A673 (cell line): ENCODE measurements at regions of chr6 and their contacts with region 1.

Region 1: DNA sequence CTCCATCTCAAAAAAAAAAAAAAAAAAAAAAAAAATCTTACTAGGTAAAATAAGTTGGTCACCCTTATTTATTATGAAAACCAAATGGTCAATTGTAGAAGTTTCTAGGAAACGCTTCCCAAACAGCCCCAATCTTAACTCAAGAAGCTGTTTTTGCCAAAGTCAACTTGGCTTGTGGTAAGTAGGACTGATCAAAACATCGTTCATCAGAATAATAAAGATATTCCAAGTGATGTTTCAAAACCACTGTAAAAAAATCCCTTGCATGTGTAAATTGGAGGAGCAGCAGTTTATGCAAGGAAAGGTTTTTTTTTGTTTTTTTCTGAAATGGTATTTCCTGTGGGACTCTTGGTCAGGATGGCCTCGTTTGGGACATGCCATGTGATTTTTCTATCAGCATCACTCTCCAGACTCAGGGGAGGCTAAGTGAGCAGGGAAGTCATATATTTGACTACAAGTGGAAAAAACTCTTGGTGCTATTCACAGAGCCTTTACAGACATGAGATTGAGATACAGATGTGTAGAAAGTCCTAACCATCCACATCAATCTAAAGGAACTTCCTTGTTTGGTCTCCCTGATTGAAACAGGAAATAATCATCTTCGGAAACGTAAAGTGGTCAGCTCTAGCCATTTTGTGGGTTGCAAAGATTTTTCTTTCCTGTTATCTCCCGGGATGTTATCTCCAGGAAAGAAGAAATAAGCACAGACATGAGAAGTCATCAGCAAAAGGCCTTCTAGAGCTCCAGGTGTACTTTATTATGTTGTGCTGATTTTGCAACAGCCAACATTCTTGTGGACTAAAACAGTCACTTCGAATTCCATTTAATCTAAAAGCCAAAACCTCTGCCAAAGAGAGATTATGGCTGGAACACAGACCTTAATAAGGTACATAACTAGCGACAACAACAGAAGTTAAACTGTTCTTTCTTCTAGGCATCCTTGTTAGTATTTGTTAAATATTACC is 177.8 kb downstream of the EDN1 start:
- DNase-seq: no peak
- H3K4me3 ChIP-seq: no peak overlapping the region
- H3K27ac ChIP-seq: no peak overlapping the region
- H3K4me1 ChIP-seq: no peaks in the 10 kb centered on the region
- H3K27me3 ChIP-seq: no peaks in the 10 kb centered on the region
- CTCF ChIP-seq: no peak

Region 2: GRCh38 chr6:12132351-12133222 is 335.4 kb before region 1 on chr6:
- CTCF ChIA-PET with region 1: no interaction called
- POLR2A ChIA-PET with region 1: no interaction called
- intact Hi-C with region 1: no loop called
- DNase-seq: no peak
- H3K4me3 ChIP-seq: no peak overlapping the region
- H3K27ac ChIP-seq: no peak overlapping the region
- H3K4me1 ChIP-seq: peaks cover 7% of the 10 kb centered on the region
- H3K27me3 ChIP-seq: no peaks in the 10 kb centered on the region
- CTCF ChIP-seq: no peak

Region 3: DNA sequence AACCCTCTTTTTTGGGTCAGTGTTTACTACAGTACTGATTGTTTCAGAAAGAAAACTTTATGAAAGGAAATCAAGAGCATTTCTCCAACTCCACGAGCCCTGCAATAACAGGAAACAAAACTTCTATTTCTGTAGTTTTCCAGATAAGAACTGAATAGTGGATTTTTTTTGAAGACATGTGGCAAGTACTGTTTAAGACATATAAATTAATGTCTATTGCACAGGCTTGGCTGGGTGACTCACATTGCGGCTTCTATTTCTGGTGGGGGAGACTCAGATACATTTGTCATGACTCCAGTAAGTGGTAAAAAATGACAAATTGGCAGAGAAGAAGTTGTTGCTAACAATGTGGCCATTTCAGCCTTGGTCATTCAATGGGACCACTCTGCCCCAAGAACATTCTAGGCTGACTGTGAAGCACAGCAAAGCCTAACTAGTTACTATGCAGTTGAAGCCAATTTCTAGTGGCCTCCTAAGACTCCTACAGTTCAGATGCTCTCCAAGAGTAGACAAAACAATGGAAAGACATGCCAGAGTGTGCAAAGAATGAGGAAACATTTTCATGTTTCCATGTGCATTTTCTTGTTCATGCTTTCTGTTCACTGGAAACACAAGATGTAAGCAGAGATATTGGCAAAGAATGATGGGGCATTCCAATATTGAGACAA is 23.1 kb after region 1 on chr6:
- CTCF ChIA-PET with region 1: no interaction called
- POLR2A ChIA-PET with region 1: interaction called, 23 read pairs
- intact Hi-C with region 1: no loop called
- DNase-seq: no peak
- H3K4me3 ChIP-seq: no peak overlapping the region
- H3K27ac ChIP-seq: no peak overlapping the region
- H3K4me1 ChIP-seq: no peaks in the 10 kb centered on the region
- H3K27me3 ChIP-seq: no peaks in the 10 kb centered on the region
- CTCF ChIP-seq: no peak